ENCODE measurements at regions of chr6 and their contacts with region 1.

Region 1: DNA sequence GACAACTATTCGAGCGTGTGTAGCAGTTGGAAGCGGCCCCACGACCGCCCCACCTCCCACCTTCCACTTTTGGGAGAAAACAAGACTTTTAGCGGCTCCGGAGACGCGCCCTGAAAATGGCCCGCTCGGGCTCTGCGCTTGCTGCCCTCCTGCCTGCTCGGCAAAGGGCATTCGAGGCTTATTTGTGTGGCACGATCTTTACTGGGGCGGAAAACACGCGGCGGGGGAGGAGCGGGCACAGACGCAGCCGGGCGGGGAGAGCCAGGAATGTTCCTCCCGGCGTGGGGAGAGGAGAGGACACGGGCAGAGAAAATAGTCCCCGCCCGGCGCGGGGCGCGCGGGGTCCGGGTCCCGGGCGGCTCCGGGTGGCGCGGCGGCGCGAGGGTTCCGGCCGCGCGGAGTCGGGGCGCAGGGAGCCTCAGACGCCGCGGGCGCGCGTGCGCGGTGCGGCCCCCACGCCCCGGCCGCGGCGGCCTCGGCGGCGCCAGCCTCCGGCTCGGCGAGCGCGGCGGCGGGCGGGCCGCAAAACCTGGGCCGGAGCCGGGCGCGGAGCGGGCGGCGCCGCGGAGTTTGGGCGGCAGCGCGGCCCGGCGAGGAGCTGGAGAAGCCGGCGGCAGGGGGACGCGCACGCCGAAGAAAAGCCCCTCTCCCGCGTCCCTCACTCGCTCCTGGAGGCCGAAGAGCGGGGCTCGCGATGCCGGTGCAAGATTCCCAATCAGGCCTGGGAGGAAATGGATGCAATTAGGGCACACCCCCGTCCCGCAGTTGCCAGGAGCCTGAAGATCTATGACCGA is 90.0 kb upstream of the ARID1B start:
- DNase-seq: peak; percentile 90
- H3K4me3 ChIP-seq: peak overlapping the region; percentile 61 to 71 (median 67)
- H3K27ac ChIP-seq: peak overlapping the region; percentile 95 to 99 (median 98)
- H3K4me1 ChIP-seq: peaks cover 0 to 18% (median 11%) of the 10 kb centered on the region in 4 donors
- H3K27me3 ChIP-seq: no peaks in the 10 kb centered on the region
- CTCF ChIP-seq: no peak
- EP300 ChIP-seq: no peak
- POLR2A ChIP-seq: peak; percentile 93

Region 2: GRCh38 chr6:156719720-156720563 is 32.8 kb after region 1 on chr6:
- in situ Hi-C with region 1: no loop called
- intact Hi-C with region 1: loop called (anchors 2 kb)
- DNase-seq: peak; percentile 98
- H3K4me3 ChIP-seq: peak overlapping the region in 3 of 4 donors; percentile 17 to 57 (median 32)
- H3K27ac ChIP-seq: peak overlapping the region; percentile 85 to 96 (median 90)
- H3K4me1 ChIP-seq: peaks cover 9 to 31% (median 24%) of the 10 kb centered on the region in 4 donors
- H3K27me3 ChIP-seq: no peaks in the 10 kb centered on the region
- CTCF ChIP-seq: no peak
- EP300 ChIP-seq: peak; percentile 43
- POLR2A ChIP-seq: peak; percentile 63

Region 3: DNA sequence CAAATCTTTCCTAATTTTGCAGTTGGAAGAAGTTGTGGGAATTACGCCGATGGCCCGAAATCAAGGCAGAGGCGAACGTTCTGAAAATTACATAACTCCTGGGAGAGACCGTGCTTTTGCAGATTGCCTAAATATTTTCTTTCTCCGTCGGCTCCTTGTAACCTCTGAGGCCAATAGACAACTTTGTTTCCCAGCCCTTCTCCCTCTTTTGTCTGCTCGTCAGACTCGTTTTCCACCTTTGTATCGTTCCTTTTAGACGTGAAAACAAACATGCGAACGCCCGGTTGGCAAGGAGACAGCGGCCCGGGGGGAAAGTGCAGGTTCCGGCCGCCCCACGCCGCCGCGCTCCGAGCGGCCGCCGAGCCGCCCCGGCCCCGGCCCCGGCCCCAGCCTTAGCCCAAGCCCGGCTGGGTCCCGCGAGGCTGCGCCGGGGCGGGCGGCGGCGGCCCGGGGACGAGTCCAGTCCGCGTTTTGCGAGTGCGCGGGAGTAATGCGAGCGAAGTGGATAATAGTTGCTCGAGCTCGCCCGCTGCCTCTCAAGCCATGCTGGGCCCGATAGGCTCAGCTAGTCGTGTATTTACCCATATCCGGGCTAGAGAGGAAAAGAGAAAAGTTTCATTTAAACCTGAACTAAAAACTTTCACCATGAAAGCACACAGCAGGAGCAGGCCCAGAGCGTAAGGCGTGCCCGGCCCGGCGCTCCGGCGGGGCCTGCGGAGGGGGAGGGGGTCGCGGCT is 89.8 kb after region 1 on chr6 and contains the start of gene ARID1B:
- in situ Hi-C with region 1: loop called in 3 of 4 experiments (anchors 5 to 10 kb)
- intact Hi-C with region 1: loop called (anchors 1 kb)
- DNase-seq: peak; percentile 88
- H3K4me3 ChIP-seq: peak within 1 kb of the TSS; percentile 88 to 99 (median 96)
- H3K27ac ChIP-seq: peak within 1 kb of the TSS; percentile 99 to 100 (median 99)
- H3K4me1 ChIP-seq: peaks cover 6 to 35% (median 27%) of the 10 kb centered on the region in 4 donors
- H3K27me3 ChIP-seq: no peaks in the 10 kb centered on the region
- CTCF ChIP-seq: no peak
- EP300 ChIP-seq: no peak
- POLR2A ChIP-seq: peak; percentile 79
- total RNA-seq, gene ARID1B: 87.1 to 194 (median 115) TPM

Region 4: DNA sequence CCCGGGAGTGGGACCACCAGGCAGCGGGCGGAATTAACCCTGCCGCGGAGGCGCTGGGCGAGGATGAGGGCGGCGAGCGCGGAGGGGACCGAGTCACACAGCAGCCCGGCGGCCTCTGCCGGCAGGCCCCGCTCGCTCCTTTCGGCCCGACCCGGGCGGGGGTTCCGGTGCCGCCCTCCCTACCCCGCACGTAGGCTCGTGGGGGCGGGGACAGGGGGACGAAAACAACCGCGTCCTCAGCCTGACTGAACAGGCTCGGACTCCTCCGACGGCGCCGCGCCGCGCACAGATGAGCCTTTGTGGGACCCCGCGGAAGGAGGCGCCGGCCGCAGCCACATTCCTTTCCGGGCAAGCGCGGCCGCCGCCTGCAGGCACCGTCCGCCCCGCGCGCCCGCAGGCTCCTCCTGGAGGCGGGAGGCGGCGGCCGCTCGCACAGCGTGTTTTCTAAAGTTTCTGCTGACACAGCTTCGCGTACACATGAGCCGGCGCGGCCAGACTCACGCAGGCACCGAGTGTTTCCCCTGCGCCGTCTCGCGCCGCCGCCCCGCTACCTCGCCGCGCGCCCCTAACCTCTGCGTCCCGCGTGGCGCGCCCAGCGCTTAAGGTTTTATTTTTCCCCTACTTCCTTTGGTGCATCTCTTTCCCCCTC is 334.3 kb after region 1 on chr6:
- in situ Hi-C with region 1: loop called in 1 of 4 experiments (anchors 25 kb)
- intact Hi-C with region 1: loop called (anchors 10 kb)
- DNase-seq: peak; percentile 94
- H3K4me3 ChIP-seq: peak overlapping the region; percentile 73 to 94 (median 82)
- H3K27ac ChIP-seq: peak overlapping the region; percentile 98 to 100 (median 100)
- H3K4me1 ChIP-seq: peaks cover 7 to 42% (median 18%) of the 10 kb centered on the region in 4 donors
- H3K27me3 ChIP-seq: no peaks in the 10 kb centered on the region
- CTCF ChIP-seq: peak; percentile 27 to 74 (median 43)
- EP300 ChIP-seq: no peak
- POLR2A ChIP-seq: peak; percentile 97